Naive thymus-derived CD4-positive, alpha-beta T cell (primary cell): ENCODE measurements at regions of chr12 and their contacts with region 1.

Region 1: GRCh38 chr12:21677622-21678277 is 20.1 kb upstream of the LDHB start:
- DNase-seq: peak in 7 of 9 donors; percentile 29 to 49 (median 42)
- ATAC-seq: peak; percentile 51
- H3K4me3 ChIP-seq: peak overlapping the region; percentile 47
- H3K4me3 Mint-ChIP-seq: peak overlapping the region; percentile 36 to 91 (median 86)
- H3K27ac ChIP-seq: peak overlapping the region; percentile 60
- H3K27ac Mint-ChIP-seq: peak overlapping the region in 8 of 9 donors; percentile 72 to 94 (median 88)
- H3K4me1 ChIP-seq: peaks cover 6 to 54% of the 10 kb centered on the region in 2 donors
- H3K4me1 Mint-ChIP-seq: peaks cover 26 to 68% (median 58%) of the 10 kb centered on the region in 7 donors
- H3K27me3 ChIP-seq: no peaks in the 10 kb centered on the region
- H3K27me3 Mint-ChIP-seq: peaks cover 0 to 3% (median 0%) of the 10 kb centered on the region in 5 donors

Region 2: DNA sequence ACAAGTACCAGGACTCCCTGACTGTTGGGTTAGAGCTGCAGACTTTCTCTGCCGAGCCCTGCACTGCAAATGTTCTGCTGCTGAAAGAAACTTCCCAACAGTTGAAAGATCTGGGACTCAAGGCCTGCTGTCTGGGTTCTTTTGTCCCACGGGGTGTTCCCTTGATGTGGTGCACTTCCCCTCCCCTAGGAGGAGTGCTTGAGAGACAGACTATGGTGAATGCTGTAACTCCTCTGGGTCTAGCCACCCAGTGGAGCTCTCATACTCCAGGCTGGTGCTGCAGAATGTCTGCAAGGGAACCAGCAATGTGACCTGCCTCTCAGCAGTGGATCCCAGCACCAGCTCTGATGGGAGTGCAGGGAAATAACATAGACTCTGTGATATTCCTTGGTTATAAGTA is 676.0 kb before region 1 on chr12:
- CTCF ChIA-PET with region 1: no interaction called
- POLR2A ChIA-PET with region 1: no interaction called
- intact Hi-C with region 1: no loop called
- DNase-seq: no peak
- ATAC-seq: no peak
- H3K4me3 ChIP-seq: no peak overlapping the region
- H3K4me3 Mint-ChIP-seq: no peak overlapping the region
- H3K27ac ChIP-seq: no peak overlapping the region
- H3K27ac Mint-ChIP-seq: no peak overlapping the region
- H3K4me1 ChIP-seq: no peaks in the 10 kb centered on the region
- H3K4me1 Mint-ChIP-seq: no peaks in the 10 kb centered on the region
- H3K27me3 ChIP-seq: no peaks in the 10 kb centered on the region
- H3K27me3 Mint-ChIP-seq: no peaks in the 10 kb centered on the region

Region 3: DNA sequence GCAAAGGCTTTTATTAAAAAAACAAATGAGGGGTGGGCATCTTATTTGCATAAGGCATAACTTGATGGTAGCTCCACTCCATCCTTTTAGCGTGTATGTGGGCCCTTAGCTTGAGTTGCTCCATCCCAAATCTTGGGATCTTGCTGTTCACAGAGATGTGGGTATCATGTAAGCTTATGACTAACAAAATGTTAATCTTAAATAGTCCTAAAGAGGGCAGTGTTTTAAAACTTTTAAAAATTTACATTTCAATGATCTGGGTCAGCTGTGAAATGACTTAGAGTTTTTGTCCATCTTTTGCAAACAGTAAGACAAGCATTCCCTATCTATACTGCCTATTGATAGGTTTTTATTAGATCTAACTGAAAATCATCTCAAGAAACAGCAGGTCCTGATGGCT is 429.1 kb before region 1 on chr12:
- CTCF ChIA-PET with region 1: no interaction called
- POLR2A ChIA-PET with region 1: no interaction called
- intact Hi-C with region 1: loop called (anchors 5 kb)
- DNase-seq: no peak
- ATAC-seq: no peak
- H3K4me3 ChIP-seq: no peak overlapping the region
- H3K4me3 Mint-ChIP-seq: no peak overlapping the region
- H3K27ac ChIP-seq: no peak overlapping the region
- H3K27ac Mint-ChIP-seq: no peak overlapping the region
- H3K4me1 ChIP-seq: no peaks in the 10 kb centered on the region
- H3K4me1 Mint-ChIP-seq: no peaks in the 10 kb centered on the region
- H3K27me3 ChIP-seq: no peaks in the 10 kb centered on the region
- H3K27me3 Mint-ChIP-seq: peaks cover 0 to 5% (median 0%) of the 10 kb centered on the region in 5 donors

Region 4: GRCh38 chr12:21438643-21439042 is 239.1 kb before region 1 on chr12:
- CTCF ChIA-PET with region 1: no interaction called
- POLR2A ChIA-PET with region 1: interaction called, 3 read pairs
- intact Hi-C with region 1: loop called in 1 of 2 experiments (anchors 5 kb)
- DNase-seq: no peak
- ATAC-seq: no peak
- H3K4me3 ChIP-seq: peak overlapping the region; percentile 91
- H3K4me3 Mint-ChIP-seq: peak overlapping the region; percentile 94 to 99 (median 98)
- H3K27ac ChIP-seq: peak overlapping the region; percentile 81
- H3K27ac Mint-ChIP-seq: peak overlapping the region; percentile 92 to 99 (median 97)
- H3K4me1 ChIP-seq: peaks cover 11 to 22% of the 10 kb centered on the region in 2 donors
- H3K4me1 Mint-ChIP-seq: peaks cover 32 to 72% (median 49%) of the 10 kb centered on the region in 7 donors
- H3K27me3 ChIP-seq: no peaks in the 10 kb centered on the region
- H3K27me3 Mint-ChIP-seq: peaks cover 0 to 10% (median 0%) of the 10 kb centered on the region in 5 donors

Region 5: DNA sequence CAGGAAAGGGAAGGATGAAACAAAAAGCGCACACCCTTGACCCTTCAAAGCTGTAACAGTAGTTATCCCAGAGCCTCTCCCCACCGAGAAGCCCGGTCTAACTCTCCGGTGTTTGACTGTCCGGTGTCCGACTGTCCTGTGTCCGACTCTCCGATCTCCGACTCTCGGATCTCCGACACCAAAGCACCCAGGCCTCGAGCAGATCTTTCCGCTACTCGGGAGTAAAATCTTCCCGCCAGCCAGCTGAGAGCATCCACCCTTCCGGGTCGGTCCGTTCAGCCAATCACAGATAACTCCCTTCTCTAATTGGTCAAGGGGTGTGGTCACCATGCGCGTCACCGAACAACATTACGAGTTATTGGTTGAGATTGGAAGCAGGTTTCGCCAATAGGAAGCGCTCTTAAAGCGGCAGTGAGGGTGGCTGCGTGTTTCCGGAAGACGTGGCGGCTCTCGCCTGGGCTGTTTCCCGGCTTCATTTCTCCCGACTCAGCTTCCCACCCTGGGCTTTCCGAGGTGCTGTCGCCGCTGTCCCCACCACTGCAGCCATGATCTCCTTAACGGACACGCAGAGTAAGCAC is 176.3 kb before region 1 on chr12 and contains the starts of genes GOLT1B and RECQL:
- CTCF ChIA-PET with region 1: interaction called, 11 read pairs
- POLR2A ChIA-PET with region 1: interaction called, 3 read pairs
- intact Hi-C with region 1: loop called (anchors 1 kb)
- DNase-seq: peak; percentile 67 to 96 (median 94)
- ATAC-seq: peak; percentile 98
- H3K4me3 ChIP-seq: peak within 1 kb of the TSS; percentile 68
- H3K4me3 Mint-ChIP-seq: no peak within 1 kb of the TSS
- H3K27ac ChIP-seq: peak within 1 kb of the TSS; percentile 87
- H3K27ac Mint-ChIP-seq: no peak within 1 kb of the TSS
- H3K4me1 ChIP-seq: peaks cover 20 to 25% of the 10 kb centered on the region in 2 donors
- H3K4me1 Mint-ChIP-seq: peaks cover 30 to 67% (median 55%) of the 10 kb centered on the region in 7 donors
- H3K27me3 ChIP-seq: no peaks in the 10 kb centered on the region
- H3K27me3 Mint-ChIP-seq: no peaks in the 10 kb centered on the region
- total RNA-seq, gene GOLT1B: 25.8 to 42.5 (median 31.7) TPM
- total RNA-seq, gene RECQL: 19.4 to 77.7 (median 43.2) TPM

Region 6: GRCh38 chr12:21580748-21581516 is 96.8 kb before region 1 on chr12:
- CTCF ChIA-PET with region 1: no interaction called
- POLR2A ChIA-PET with region 1: no interaction called
- intact Hi-C with region 1: no loop called
- DNase-seq: no peak
- ATAC-seq: no peak
- H3K4me3 ChIP-seq: no peak overlapping the region
- H3K4me3 Mint-ChIP-seq: no peak overlapping the region
- H3K27ac ChIP-seq: no peak overlapping the region
- H3K27ac Mint-ChIP-seq: no peak overlapping the region
- H3K4me1 ChIP-seq: no peaks in the 10 kb centered on the region
- H3K4me1 Mint-ChIP-seq: peaks cover 0 to 6% (median 0%) of the 10 kb centered on the region in 7 donors
- H3K27me3 ChIP-seq: peaks cover 0 to 3% of the 10 kb centered on the region in 2 donors
- H3K27me3 Mint-ChIP-seq: peaks cover 5 to 26% (median 17%) of the 10 kb centered on the region in 5 donors

Region 7: DNA sequence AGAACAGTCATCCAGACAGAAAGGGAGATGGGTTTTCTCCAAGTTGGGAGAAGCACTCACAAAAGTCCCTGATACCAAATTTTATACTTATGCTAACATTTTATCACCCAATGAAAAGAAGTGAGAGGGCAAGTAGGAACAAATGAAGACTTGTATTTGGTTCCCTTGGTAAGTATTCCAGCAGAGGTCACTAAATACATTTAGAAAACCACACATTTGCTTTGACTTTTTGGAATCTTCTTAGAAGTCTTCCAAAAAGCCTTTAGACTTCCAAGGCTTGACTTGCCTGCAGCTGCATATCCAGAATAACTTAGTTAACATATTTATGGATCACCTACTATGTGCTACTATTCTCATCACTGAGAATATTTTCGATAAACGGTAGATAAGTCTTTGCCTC is 70.0 kb before region 1 on chr12:
- CTCF ChIA-PET with region 1: interaction called, 68 read pairs
- POLR2A ChIA-PET with region 1: interaction called, 86 read pairs
- intact Hi-C with region 1: loop called (anchors 1 kb)
- DNase-seq: peak in 6 of 9 donors; percentile 14 to 57 (median 43)
- ATAC-seq: no peak
- H3K4me3 ChIP-seq: no peak overlapping the region
- H3K4me3 Mint-ChIP-seq: no peak overlapping the region
- H3K27ac ChIP-seq: no peak overlapping the region
- H3K27ac Mint-ChIP-seq: no peak overlapping the region
- H3K4me1 ChIP-seq: peaks cover 0 to 10% of the 10 kb centered on the region in 2 donors
- H3K4me1 Mint-ChIP-seq: peaks cover 2 to 8% (median 7%) of the 10 kb centered on the region in 7 donors
- H3K27me3 ChIP-seq: no peaks in the 10 kb centered on the region
- H3K27me3 Mint-ChIP-seq: peaks cover 0 to 7% (median 0%) of the 10 kb centered on the region in 5 donors

Region 8: DNA sequence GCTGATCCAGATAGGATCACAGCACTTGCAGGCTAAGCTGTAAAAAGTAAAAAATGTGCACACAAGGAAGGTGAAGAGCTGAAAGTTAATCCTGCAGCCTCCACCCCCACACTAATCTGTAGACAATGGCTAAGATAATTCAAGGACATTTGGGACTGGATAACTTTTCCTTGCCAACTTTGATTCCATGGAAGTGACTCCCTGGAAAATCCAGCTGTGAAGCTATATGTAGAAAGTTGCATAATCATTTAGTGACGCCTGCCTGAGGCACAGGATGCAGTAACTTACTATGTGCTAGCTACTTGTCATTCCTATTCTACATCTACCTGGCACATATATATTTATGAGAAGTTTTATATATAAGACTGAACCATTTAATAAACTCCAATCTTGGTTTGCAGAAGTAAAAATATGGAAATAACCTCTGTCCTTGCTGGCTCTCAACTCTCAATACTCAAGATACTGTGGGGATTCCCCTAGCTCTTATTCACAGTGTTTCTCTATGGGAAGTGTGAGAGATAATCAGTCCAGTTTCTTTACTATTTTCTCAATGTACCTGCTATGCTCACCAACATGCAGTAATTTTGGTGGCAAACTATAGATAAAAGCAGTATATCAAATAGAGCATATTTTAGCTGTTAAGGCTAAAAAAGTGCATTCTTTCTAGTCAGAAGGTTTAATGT is 34.9 kb before region 1 on chr12:
- CTCF ChIA-PET with region 1: interaction called, 15 read pairs
- POLR2A ChIA-PET with region 1: interaction called, 242 read pairs
- intact Hi-C with region 1: loop called (anchors 5 kb)
- DNase-seq: no peak
- ATAC-seq: no peak
- H3K4me3 ChIP-seq: no peak overlapping the region
- H3K4me3 Mint-ChIP-seq: peak overlapping the region in 8 of 10 donors; percentile 12 to 89 (median 44)
- H3K27ac ChIP-seq: peak overlapping the region; percentile 47
- H3K27ac Mint-ChIP-seq: peak overlapping the region in 8 of 9 donors; percentile 8 to 89 (median 76)
- H3K4me1 ChIP-seq: peaks cover 11 to 64% of the 10 kb centered on the region in 2 donors
- H3K4me1 Mint-ChIP-seq: peaks cover 53 to 98% (median 91%) of the 10 kb centered on the region in 7 donors
- H3K27me3 ChIP-seq: no peaks in the 10 kb centered on the region
- H3K27me3 Mint-ChIP-seq: no peaks in the 10 kb centered on the region

Region 9: DNA sequence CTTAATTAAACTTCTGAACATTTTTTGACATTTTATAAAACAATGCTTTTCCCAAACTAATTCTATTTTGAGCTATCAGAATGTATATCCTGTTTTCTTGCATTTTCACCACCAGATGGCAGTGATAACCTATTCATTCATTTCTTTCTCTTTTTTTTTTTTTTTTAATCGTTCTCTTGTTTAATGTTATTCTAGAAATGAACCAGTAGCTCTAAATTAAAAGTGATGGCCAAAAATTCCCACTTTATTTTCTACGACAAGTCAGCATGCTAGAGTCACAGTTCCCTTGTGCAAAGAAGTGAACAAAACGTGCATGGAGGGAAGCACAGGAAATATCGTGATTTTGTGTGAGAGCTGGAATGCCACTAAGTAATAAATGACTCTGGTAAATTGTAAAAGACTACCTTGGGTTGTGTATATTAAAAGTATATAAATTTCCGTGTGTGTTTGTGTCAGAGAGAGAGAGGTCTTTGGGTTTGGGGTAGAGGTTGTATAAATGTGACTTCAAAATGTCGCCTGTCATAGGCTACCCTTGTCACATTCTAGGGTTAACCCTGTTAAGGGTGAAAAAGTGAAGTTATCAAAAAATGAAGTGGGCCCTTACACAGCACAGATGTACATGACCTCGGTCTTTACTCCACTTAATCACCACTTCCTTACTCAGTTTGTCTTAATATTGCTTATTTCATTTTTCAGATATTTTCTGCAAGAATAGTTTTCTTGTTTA is 20.3 kb after region 1 on chr12:
- CTCF ChIA-PET with region 1: interaction called, 17 read pairs
- POLR2A ChIA-PET with region 1: interaction called, 4 read pairs
- intact Hi-C with region 1: no loop called
- DNase-seq: peak in 5 of 9 donors; percentile 23 to 48 (median 45)
- ATAC-seq: peak; percentile 54
- H3K4me3 ChIP-seq: no peak overlapping the region
- H3K4me3 Mint-ChIP-seq: peak overlapping the region in 6 of 10 donors; percentile 21 to 83 (median 52)
- H3K27ac ChIP-seq: no peak overlapping the region
- H3K27ac Mint-ChIP-seq: no peak overlapping the region
- H3K4me1 ChIP-seq: peaks cover 0 to 5% of the 10 kb centered on the region in 2 donors
- H3K4me1 Mint-ChIP-seq: peaks cover 0 to 22% (median 11%) of the 10 kb centered on the region in 7 donors
- H3K27me3 ChIP-seq: no peaks in the 10 kb centered on the region
- H3K27me3 Mint-ChIP-seq: peaks cover 0 to 15% (median 0%) of the 10 kb centered on the region in 5 donors